ENCODE measurements at regions of chr22 and their contacts with region 1.

Region 1: GRCh38 chr22:19854778-19855503 is at the starts of genes GNB1L and RTL10:
- DNase-seq: peak; percentile 91 to 97 (median 94)
- ATAC-seq: peak; percentile 97
- H3K4me3 ChIP-seq: peak within 1 kb of the TSS; percentile 64
- H3K4me3 Mint-ChIP-seq: peak within 1 kb of the TSS; percentile 94 to 99 (median 96)
- H3K27ac ChIP-seq: peak within 1 kb of the TSS; percentile 87
- H3K27ac Mint-ChIP-seq: peak within 1 kb of the TSS; percentile 90 to 96 (median 93)
- H3K4me1 ChIP-seq: peaks cover 19 to 21% of the 10 kb centered on the region in 2 donors
- H3K4me1 Mint-ChIP-seq: peaks cover 38 to 78% (median 65%) of the 10 kb centered on the region in 7 donors
- H3K27me3 ChIP-seq: no peaks in the 10 kb centered on the region
- H3K27me3 Mint-ChIP-seq: no peaks in the 10 kb centered on the region
- total RNA-seq, gene GNB1L: 4.2 to 14.1 (median 9.5) TPM
- total RNA-seq, gene RTL10: 18.2 to 36.8 (median 24.9) TPM

Region 2: DNA sequence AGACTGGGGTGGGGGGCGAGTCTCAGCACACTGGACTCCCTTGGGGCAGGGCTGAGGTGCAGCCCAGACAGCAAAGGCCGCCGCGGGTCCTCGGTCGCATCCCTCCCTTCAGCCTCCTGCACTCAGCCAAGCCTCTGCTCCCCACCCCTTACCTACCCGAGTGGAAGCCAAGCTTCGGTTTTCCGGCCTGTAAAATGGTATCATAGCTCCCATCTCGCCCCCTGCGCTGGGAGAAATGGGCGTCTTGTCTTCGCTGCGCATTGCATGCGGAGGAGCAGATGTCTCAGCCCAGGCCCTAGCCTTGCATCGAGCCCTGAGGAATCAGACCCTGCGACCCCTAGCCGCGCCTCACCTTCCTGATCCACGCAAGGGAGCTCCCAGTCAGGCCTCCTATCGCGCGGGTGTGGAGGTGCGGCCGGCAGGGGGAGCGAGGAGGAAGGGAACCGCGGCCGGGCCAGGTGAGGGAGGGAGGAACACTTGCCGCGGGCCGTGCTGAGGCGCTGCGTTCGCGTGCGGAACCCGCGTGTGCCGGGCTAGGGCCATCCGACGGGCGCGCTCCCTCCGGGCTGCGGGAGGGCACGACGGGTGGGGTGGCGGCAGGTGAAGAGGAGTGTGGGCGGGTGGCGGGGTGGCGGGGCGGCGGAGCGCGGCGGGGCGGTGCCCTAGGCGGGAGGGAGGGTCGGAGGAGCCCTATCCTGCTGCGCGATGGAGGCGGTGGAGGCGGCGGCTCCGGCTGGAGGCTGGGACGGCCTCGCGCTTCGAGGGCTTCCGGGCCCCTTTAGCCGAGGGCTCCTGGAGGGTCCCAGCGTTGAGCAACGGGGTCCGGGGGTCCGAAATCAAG is 98.4 kb before region 1 on chr22:
- CTCF ChIA-PET with region 1: no interaction called
- POLR2A ChIA-PET with region 1: no interaction called
- intact Hi-C with region 1: loop called in 1 of 2 experiments (anchors 5 kb)
- DNase-seq: peak; percentile 56 to 79 (median 70)
- ATAC-seq: peak; percentile 79
- H3K4me3 ChIP-seq: peak overlapping the region; percentile 39
- H3K4me3 Mint-ChIP-seq: peak overlapping the region; percentile 62 to 89 (median 74)
- H3K27ac ChIP-seq: no peak overlapping the region
- H3K27ac Mint-ChIP-seq: no peak overlapping the region
- H3K4me1 ChIP-seq: peaks cover 8 to 23% of the 10 kb centered on the region in 2 donors
- H3K4me1 Mint-ChIP-seq: peaks cover 19 to 41% (median 25%) of the 10 kb centered on the region in 7 donors
- H3K27me3 ChIP-seq: peaks cover 0 to 11% of the 10 kb centered on the region in 2 donors
- H3K27me3 Mint-ChIP-seq: peaks cover 39 to 67% (median 53%) of the 10 kb centered on the region in 5 donors

Region 3: DNA sequence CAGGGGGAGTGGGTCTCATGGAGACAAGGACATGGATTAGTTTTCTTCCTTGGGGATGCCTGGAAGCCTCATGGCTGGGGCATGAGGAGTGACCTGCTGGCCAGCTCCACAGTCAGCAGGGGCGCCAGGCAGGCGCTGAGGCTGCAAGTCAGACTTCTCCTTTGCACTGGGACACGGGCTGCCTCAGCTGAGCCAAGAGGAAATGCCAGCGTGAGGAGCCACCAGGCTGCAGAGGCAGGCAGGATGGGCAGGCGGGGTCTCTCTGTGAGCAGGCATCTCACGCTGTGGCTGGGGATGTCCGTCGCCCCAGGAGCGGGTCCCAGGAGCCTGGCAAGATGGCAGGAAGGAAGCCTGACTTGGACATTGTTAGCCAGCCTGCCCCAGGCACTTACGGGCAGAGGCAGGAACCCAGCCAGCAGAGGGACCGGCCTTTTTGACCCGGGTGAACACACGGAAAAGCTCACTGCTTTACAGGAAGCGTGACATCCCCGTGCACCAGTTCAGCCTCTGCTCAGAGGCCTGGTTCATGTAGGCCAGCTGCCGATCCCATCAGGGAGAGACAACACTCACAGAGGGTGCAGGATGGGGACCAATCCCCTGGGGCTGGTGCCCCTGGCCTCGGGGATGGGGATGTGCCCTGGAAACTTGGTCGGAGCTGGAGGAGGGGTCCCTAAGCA is 10.4 kb before region 1 on chr22:
- CTCF ChIA-PET with region 1: interaction called, 3 read pairs
- POLR2A ChIA-PET with region 1: interaction called, 5 read pairs
- intact Hi-C with region 1: loop called in 1 of 2 experiments (anchors 1 kb)
- DNase-seq: peak in 7 of 9 donors; percentile 21 to 47 (median 41)
- ATAC-seq: peak; percentile 76
- H3K4me3 ChIP-seq: peak overlapping the region; percentile 9
- H3K4me3 Mint-ChIP-seq: peak overlapping the region; percentile 23 to 80 (median 76)
- H3K27ac ChIP-seq: peak overlapping the region; percentile 63
- H3K27ac Mint-ChIP-seq: peak overlapping the region; percentile 58 to 92 (median 86)
- H3K4me1 ChIP-seq: peaks cover 0 to 19% of the 10 kb centered on the region in 2 donors
- H3K4me1 Mint-ChIP-seq: peaks cover 6 to 51% (median 36%) of the 10 kb centered on the region in 7 donors
- H3K27me3 ChIP-seq: no peaks in the 10 kb centered on the region
- H3K27me3 Mint-ChIP-seq: no peaks in the 10 kb centered on the region

Region 4: DNA sequence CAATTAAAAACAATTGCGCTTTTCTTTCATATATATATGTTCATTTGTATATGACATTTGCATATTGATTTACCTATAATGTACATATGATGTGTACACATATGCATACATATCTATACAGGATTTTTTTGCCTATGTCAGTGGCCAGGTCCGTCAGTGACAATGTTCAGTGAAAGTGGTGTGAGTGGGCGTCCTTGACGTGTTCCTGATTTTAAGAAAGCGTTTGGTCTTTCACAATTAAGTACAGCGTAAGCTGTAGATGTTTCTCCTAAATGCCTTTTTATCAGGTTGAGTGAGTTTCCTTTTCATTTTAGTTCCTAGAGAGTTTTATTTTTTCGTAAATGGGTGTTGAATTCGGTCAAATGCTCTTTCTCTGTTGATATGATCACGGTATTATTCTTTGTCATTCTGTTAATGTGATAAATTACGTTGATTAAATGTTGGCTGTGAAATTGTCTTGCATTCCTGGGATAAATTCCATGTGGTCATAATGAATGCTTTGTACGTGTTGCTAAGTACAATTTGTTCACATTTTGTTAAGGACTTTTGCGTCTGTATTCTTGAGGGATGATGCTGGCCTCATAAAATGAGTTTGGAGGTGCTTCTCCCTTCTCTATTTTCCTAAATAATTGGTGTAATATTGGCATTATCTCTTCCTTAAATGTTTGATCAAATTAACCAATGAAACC is 10.3 kb after region 1 on chr22:
- CTCF ChIA-PET with region 1: no interaction called
- POLR2A ChIA-PET with region 1: interaction called, 25 read pairs
- intact Hi-C with region 1: no loop called
- DNase-seq: no peak
- ATAC-seq: no peak
- H3K4me3 ChIP-seq: no peak overlapping the region
- H3K4me3 Mint-ChIP-seq: no peak overlapping the region
- H3K27ac ChIP-seq: no peak overlapping the region
- H3K27ac Mint-ChIP-seq: peak overlapping the region in 1 of 9 donors; percentile 12
- H3K4me1 ChIP-seq: no peaks in the 10 kb centered on the region
- H3K4me1 Mint-ChIP-seq: peaks cover 0 to 21% (median 13%) of the 10 kb centered on the region in 7 donors
- H3K27me3 ChIP-seq: no peaks in the 10 kb centered on the region
- H3K27me3 Mint-ChIP-seq: peaks cover 0 to 15% (median 0%) of the 10 kb centered on the region in 5 donors

Region 5: DNA sequence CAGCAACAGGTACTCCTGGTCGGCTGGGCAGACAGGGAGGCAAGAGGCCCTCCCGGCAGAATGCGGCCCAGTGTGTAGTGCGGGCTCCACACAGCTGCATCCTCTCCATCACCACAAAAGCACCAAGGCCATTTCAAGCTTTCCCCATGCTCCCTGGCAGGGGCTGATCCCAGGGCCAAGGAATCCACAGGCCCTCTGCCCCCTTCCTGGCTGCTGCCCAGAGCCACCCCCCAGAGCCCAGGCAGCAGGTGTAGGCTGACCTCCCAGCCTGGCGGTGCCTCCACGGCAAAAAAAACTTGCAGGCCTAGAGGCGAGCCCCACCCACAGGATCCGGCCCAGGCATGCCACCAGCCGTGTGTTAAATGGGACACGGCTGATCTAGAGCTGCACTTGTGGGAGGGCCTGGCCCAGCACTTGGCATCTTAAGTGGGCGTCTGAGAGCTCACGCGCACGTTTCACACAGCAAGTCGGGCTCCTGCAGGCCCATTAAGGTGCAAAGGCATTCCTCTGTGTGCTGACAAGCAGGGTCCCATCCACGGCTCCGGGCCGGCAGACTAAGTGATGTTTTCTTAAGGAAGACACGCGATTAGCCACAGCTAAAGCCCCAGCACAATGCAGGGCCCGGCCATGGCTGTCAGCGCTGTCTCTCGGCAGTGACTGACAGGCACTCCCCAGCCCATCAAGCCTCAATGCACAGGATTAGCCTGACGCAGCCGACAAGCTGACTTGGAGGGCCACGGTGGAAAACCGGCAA is 19.5 kb after region 1 on chr22:
- CTCF ChIA-PET with region 1: no interaction called
- POLR2A ChIA-PET with region 1: interaction called, 27 read pairs
- intact Hi-C with region 1: no loop called
- DNase-seq: peak in 4 of 9 donors; percentile 37 to 51 (median 46)
- ATAC-seq: peak; percentile 68
- H3K4me3 ChIP-seq: no peak overlapping the region
- H3K4me3 Mint-ChIP-seq: peak overlapping the region; percentile 9 to 61 (median 52)
- H3K27ac ChIP-seq: peak overlapping the region; percentile 47
- H3K27ac Mint-ChIP-seq: peak overlapping the region in 8 of 9 donors; percentile 52 to 81 (median 72)
- H3K4me1 ChIP-seq: peaks cover 0 to 17% of the 10 kb centered on the region in 2 donors
- H3K4me1 Mint-ChIP-seq: peaks cover 0 to 13% (median 10%) of the 10 kb centered on the region in 7 donors
- H3K27me3 ChIP-seq: no peaks in the 10 kb centered on the region
- H3K27me3 Mint-ChIP-seq: no peaks in the 10 kb centered on the region

Region 6: GRCh38 chr22:19896665-19897355 is 41.9 kb after region 1 on chr22:
- CTCF ChIA-PET with region 1: interaction called, 6 read pairs
- POLR2A ChIA-PET with region 1: interaction called, 154 read pairs
- intact Hi-C with region 1: no loop called
- DNase-seq: peak in 7 of 9 donors; percentile 30 to 55 (median 46)
- ATAC-seq: peak; percentile 36
- H3K4me3 ChIP-seq: no peak overlapping the region
- H3K4me3 Mint-ChIP-seq: peak overlapping the region in 8 of 10 donors; percentile 16 to 61 (median 48)
- H3K27ac ChIP-seq: peak overlapping the region; percentile 45
- H3K27ac Mint-ChIP-seq: peak overlapping the region in 8 of 9 donors; percentile 75 to 100 (median 92)
- H3K4me1 ChIP-seq: peaks cover 15 to 57% of the 10 kb centered on the region in 2 donors
- H3K4me1 Mint-ChIP-seq: peaks cover 18 to 61% (median 58%) of the 10 kb centered on the region in 7 donors
- H3K27me3 ChIP-seq: no peaks in the 10 kb centered on the region
- H3K27me3 Mint-ChIP-seq: no peaks in the 10 kb centered on the region

Region 7: DNA sequence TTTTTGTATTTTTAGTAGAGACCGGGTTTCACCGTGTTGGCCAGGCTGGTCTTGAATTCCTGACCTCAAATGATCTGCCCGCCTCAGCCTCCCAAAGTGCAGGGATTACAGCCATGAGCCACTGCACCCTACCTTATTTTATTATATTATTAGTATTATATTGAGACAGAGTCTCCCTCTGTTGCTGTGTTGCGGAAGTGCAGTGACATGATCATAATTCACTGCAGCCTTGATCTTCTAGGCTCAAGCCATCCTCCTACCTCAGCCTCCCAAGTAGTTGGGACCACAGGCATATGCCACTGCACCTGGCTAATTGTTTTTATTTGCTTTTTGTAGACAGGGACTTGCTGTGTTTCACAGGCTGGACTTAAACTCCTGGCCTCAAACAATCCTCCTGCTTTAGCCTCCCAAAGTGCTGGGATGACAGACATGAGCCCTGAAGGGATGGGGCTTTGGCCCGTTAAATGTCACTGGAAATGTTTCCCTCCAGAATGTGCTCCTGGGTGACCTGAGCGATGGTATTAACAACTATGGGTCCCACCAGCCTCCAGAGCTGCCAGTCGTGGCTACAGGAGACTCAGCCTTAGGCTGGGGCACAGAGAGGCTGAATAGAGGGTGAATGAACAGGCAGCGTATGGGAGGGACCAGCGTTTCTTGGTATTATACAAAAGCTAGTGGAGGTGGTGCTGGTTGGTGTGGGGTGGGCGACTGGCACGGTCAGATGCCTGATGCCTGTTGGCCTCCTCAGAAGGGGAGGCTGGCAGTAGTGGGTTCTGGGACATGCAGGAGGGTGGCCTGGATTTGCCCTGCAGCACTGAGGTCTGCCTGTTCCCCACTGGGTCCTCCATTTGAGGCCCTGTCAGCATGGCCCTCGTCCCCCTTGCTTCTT is 173.3 kb after region 1 on chr22:
- CTCF ChIA-PET with region 1: no interaction called
- POLR2A ChIA-PET with region 1: no interaction called
- intact Hi-C with region 1: no loop called
- DNase-seq: peak in 1 of 9 donors; percentile 25
- ATAC-seq: no peak
- H3K4me3 ChIP-seq: no peak overlapping the region
- H3K4me3 Mint-ChIP-seq: no peak overlapping the region
- H3K27ac ChIP-seq: no peak overlapping the region
- H3K27ac Mint-ChIP-seq: no peak overlapping the region
- H3K4me1 ChIP-seq: peaks cover 11 to 13% of the 10 kb centered on the region in 2 donors
- H3K4me1 Mint-ChIP-seq: peaks cover 13 to 62% (median 34%) of the 10 kb centered on the region in 7 donors
- H3K27me3 ChIP-seq: no peaks in the 10 kb centered on the region
- H3K27me3 Mint-ChIP-seq: no peaks in the 10 kb centered on the region